Activated CD4-positive, alpha-beta memory T cell treated with anti-CD3 and anti-CD28 coated beads for 36 hours (primary cell): ENCODE measurements at regions of chr2 and their contacts with region 1.

Region 1: DNA sequence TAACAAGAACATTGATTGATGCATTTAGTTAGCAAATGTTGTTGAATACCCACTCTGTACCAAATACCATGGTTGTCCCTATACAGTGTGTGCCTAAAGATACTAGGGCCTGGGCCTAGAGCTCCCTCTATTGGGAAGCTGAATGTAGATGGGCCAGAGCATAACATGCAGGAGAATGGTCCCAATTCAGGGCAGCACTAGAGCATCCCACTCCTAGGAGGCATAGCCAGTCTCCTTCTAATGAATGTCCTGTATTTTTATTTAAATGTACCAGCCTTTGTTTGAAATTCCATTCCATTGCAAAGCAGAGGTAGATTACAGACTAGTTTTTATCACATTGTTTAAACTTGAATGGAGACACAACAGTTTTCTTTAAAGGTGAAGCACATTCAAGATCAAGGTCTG is 90.6 kb downstream of the FEZ2 start:
- DNase-seq: peak; percentile 48
- H3K4me3 Mint-ChIP-seq: no peak overlapping the region
- H3K27ac Mint-ChIP-seq: no peak overlapping the region
- H3K4me1 Mint-ChIP-seq: no peaks in the 10 kb centered on the region
- H3K27me3 Mint-ChIP-seq: no peaks in the 10 kb centered on the region

Region 2: DNA sequence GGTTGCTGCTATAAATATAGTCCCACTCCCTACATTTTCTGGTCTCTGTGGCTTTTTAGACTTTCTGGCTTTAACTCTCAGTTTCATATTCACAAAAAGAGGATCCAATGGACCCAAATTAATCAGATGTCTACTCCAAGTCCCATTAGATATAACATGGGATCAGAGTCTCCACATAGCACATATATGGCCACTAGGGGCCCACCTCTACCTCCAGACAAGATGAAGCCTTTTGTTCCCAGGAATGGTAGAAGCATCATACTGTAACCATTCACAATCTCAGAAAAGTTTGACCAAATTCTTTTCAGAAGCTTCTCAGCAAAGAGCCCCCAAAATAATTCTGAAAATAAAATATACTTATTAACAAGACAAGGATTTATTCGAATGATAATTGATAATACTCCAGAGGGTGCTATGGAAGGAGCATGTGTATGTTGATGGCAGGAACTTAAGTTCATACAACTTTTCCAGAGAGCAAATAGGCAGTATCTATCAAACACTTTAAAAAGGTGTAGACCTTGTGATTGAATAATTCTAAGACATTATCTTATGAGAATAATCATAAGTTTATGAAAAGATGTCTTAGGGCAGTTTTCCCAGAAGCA is 534.2 kb before region 1 on chr2:
- CTCF ChIA-PET with region 1: no interaction called
- POLR2A ChIA-PET with region 1: no interaction called
- intact Hi-C with region 1: loop called (anchors 5 kb)
- DNase-seq: no peak
- H3K4me3 Mint-ChIP-seq: no peak overlapping the region
- H3K27ac Mint-ChIP-seq: no peak overlapping the region
- H3K4me1 Mint-ChIP-seq: peaks cover 2% of the 10 kb centered on the region
- H3K27me3 Mint-ChIP-seq: no peaks in the 10 kb centered on the region

Region 3: GRCh38 chr2:36539631-36540030 is 32.2 kb after region 1 on chr2:
- CTCF ChIA-PET with region 1: no interaction called
- POLR2A ChIA-PET with region 1: no interaction called
- intact Hi-C with region 1: no loop called
- DNase-seq: no peak
- H3K4me3 Mint-ChIP-seq: no peak overlapping the region
- H3K27ac Mint-ChIP-seq: no peak overlapping the region
- H3K4me1 Mint-ChIP-seq: no peaks in the 10 kb centered on the region
- H3K27me3 Mint-ChIP-seq: no peaks in the 10 kb centered on the region

Region 4: GRCh38 chr2:36663851-36664695 is 156.7 kb after region 1 on chr2:
- CTCF ChIA-PET with region 1: no interaction called
- POLR2A ChIA-PET with region 1: no interaction called
- intact Hi-C with region 1: loop called (anchors 5 kb)
- DNase-seq: peak; percentile 14
- H3K4me3 Mint-ChIP-seq: no peak overlapping the region
- H3K27ac Mint-ChIP-seq: no peak overlapping the region
- H3K4me1 Mint-ChIP-seq: no peaks in the 10 kb centered on the region
- H3K27me3 Mint-ChIP-seq: peaks cover 13% of the 10 kb centered on the region